HEK293 (cell line): ENCODE measurements at regions of chr1 and their contacts with region 1.

Region 1: GRCh38 chr1:178282949-178283367 is 189.1 kb downstream of the RASAL2 start:
- H3K4me3 ChIP-seq: no peak overlapping the region
- H3K27ac ChIP-seq: no peak overlapping the region
- H3K4me1 ChIP-seq: no peaks in the 10 kb centered on the region
- CTCF ChIP-seq: no peak

Region 2: DNA sequence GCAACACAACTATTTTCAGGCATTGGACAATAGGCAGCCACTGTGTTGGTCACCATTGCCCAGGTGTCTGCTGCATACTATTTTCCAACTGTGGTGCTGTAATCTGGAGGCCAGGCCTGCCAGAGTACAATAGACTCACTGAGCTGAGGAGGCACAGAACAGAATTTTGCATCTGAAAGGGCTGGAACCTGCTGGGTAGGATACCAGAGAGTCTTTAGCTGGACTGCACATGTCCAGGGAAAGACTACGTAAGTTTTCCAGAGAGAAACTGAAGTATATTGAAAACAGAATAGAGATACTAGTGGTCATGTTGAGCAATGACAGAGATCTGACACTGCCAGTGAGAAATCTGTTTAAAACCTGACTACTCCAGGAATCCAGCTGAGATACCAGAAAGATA is 11.7 kb after region 1 on chr1:
- CTCF ChIA-PET with region 1: interaction called, 14 read pairs
- POLR2A ChIA-PET with region 1: no interaction called
- H3K4me3 ChIP-seq: no peak overlapping the region
- H3K27ac ChIP-seq: no peak overlapping the region
- H3K4me1 ChIP-seq: 0 out of 2 replicates have a peak, but pooled peaks cover 3% of the 10 kb centered on the region
- CTCF ChIP-seq: no peak